Right cardiac atrium (tissue), 5 donors: ENCODE measurements at regions of chr3 and their contacts with region 1.

Region 1: DNA sequence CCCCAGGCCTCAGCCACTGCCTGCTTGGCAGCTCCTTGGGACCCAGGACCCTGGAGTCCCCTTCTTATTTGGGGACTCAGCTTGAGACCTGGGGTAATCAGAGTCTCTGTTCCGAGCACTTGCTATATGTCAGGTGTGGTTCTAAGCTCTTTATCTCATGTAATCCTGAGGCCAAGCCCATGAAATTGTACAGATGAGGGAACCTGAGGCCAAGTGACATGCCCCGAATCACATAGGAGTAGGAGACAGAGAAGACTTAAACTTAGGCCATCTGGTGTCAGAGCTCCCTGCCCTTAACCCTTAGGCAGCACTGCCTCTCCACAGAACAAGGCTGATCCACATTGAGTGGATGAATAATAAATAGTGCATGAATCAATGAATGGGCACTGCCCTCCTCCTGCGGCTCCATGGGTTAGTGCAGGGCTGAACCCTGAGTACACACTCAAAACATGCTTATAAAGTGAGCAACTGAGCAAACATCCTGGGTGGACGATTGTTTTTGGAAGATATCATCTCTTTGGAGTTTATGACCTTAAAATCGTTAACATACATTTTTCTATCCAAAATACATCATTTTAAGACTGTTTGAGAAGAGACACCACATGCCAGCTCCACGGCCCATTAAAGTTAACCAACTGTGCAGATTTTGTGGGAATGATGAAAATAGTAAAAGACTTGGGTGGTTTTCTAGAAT is 33.2 kb upstream of the IQSEC1 start:
- DNase-seq: no peak
- ATAC-seq: no peak
- H3K4me3 ChIP-seq: no peak overlapping the region
- H3K27ac ChIP-seq: no peak overlapping the region
- H3K4me1 ChIP-seq: no peaks in the 10 kb centered on the region
- H3K27me3 ChIP-seq: no peaks in the 10 kb centered on the region

Region 2: GRCh38 chr3:13308380-13308801 is 201.9 kb after region 1 on chr3:
- intact Hi-C with region 1: loop called in 1 of 4 experiments (anchors 10 kb)
- DNase-seq: peak in 1 of 3 donors; percentile 60
- ATAC-seq: peak in 1 of 2 donors; percentile 41
- H3K4me3 ChIP-seq: no peak overlapping the region
- H3K27ac ChIP-seq: no peak overlapping the region
- H3K4me1 ChIP-seq: no peaks in the 10 kb centered on the region
- H3K27me3 ChIP-seq: no peaks in the 10 kb centered on the region